ENCODE measurements at regions of chr6 and their contacts with region 1.

Region 1: GRCh38 chr6:64330694-64331307 is 695.2 kb downstream of the PHF3 start:
- DNase-seq: peak; percentile 14 to 89 (median 66)
- H3K4me3 ChIP-seq: no peak overlapping the region
- H3K27ac ChIP-seq: no peak overlapping the region
- H3K27me3 ChIP-seq: no peaks in the 10 kb centered on the region
- CTCF ChIP-seq: peak; percentile 33 to 80 (median 66)

Region 2: GRCh38 chr6:63923139-63923739 is 407.6 kb before region 1 on chr6:
- intact Hi-C with region 1: loop called in 1 of 2 experiments (anchors 2 kb)
- DNase-seq: no peak
- H3K4me3 ChIP-seq: no peak overlapping the region
- H3K27ac ChIP-seq: no peak overlapping the region
- H3K27me3 ChIP-seq: peaks cover 0 to 6% (median 0%) of the 10 kb centered on the region in 45 donors
- CTCF ChIP-seq: peak; percentile 39 to 89 (median 74)

Region 3: GRCh38 chr6:64012351-64013001 is 318.3 kb before region 1 on chr6:
- intact Hi-C with region 1: loop called (anchors 2 to 10 kb)
- DNase-seq: peak in 3 of 10 donors; percentile 22 to 74 (median 49)
- H3K4me3 ChIP-seq: peak overlapping the region in 57 of 59 donors; percentile 0 to 59 (median 35)
- H3K27ac ChIP-seq: peak overlapping the region in 14 of 59 donors; percentile 2 to 55 (median 34)
- H3K27me3 ChIP-seq: no peaks in the 10 kb centered on the region
- CTCF ChIP-seq: peak; percentile 45 to 81 (median 69)

Measured in dorsolateral prefrontal cortex (tissue), 120 donors.